CD4-positive, alpha-beta T cell (primary cell): ENCODE measurements at regions of chr11 and their contacts with region 1.

Region 1: GRCh38 chr11:33857933-33858371 is 33.9 kb downstream of the LMO2 start:
- DNase-seq: peak; percentile 54 to 84 (median 64)
- ATAC-seq: peak; percentile 89
- H3K4me3 ChIP-seq: no peak overlapping the region
- H3K4me3 Mint-ChIP-seq: no peak overlapping the region
- H3K27ac ChIP-seq: no peak overlapping the region
- H3K27ac Mint-ChIP-seq: no peak overlapping the region
- H3K4me1 ChIP-seq: no peaks in the 10 kb centered on the region
- H3K4me1 Mint-ChIP-seq: no peaks in the 10 kb centered on the region
- H3K27me3 ChIP-seq: peaks cover 21 to 30% of the 10 kb centered on the region in 2 experiments
- H3K27me3 Mint-ChIP-seq: peaks cover 56% of the 10 kb centered on the region
- CTCF ChIP-seq: peak; percentile 74

Region 2: GRCh38 chr11:33970984-33971466 is 113.1 kb after region 1 on chr11:
- CTCF ChIA-PET with region 1: no interaction called
- POLR2A ChIA-PET with region 1: interaction called, 3 read pairs
- intact Hi-C with region 1: loop called (anchors 1 to 2 kb)
- DNase-seq: peak in 5 of 14 experiments; percentile 4 to 49 (median 24)
- ATAC-seq: no peak
- H3K4me3 ChIP-seq: no peak overlapping the region
- H3K4me3 Mint-ChIP-seq: no peak overlapping the region
- H3K27ac ChIP-seq: no peak overlapping the region
- H3K27ac Mint-ChIP-seq: no peak overlapping the region
- H3K4me1 ChIP-seq: no peaks in the 10 kb centered on the region
- H3K4me1 Mint-ChIP-seq: no peaks in the 10 kb centered on the region
- H3K27me3 ChIP-seq: peaks cover 0 to 3% of the 10 kb centered on the region in 2 experiments
- H3K27me3 Mint-ChIP-seq: peaks cover 5% of the 10 kb centered on the region
- CTCF ChIP-seq: no peak

Region 3: GRCh38 chr11:33987975-33988580 is 130.1 kb after region 1 on chr11:
- CTCF ChIA-PET with region 1: interaction called, 5 read pairs
- POLR2A ChIA-PET with region 1: no interaction called
- intact Hi-C with region 1: loop called (anchors 1 kb)
- DNase-seq: peak; percentile 49 to 88 (median 63)
- ATAC-seq: peak; percentile 86
- H3K4me3 ChIP-seq: no peak overlapping the region
- H3K4me3 Mint-ChIP-seq: no peak overlapping the region
- H3K27ac ChIP-seq: no peak overlapping the region
- H3K27ac Mint-ChIP-seq: no peak overlapping the region
- H3K4me1 ChIP-seq: no peaks in the 10 kb centered on the region
- H3K4me1 Mint-ChIP-seq: peaks cover 6% of the 10 kb centered on the region
- H3K27me3 ChIP-seq: peaks cover 0 to 2% of the 10 kb centered on the region in 2 experiments
- H3K27me3 Mint-ChIP-seq: peaks cover 9% of the 10 kb centered on the region
- CTCF ChIP-seq: peak; percentile 64

Region 4: GRCh38 chr11:34492806-34493414 is 635.0 kb after region 1 on chr11:
- CTCF ChIA-PET with region 1: interaction called, 3 read pairs
- POLR2A ChIA-PET with region 1: no interaction called
- intact Hi-C with region 1: loop called in 1 of 2 experiments (anchors 5 kb)
- DNase-seq: peak in 12 of 14 experiments; percentile 7 to 64 (median 17)
- ATAC-seq: no peak
- H3K4me3 ChIP-seq: no peak overlapping the region
- H3K4me3 Mint-ChIP-seq: no peak overlapping the region
- H3K27ac ChIP-seq: no peak overlapping the region
- H3K27ac Mint-ChIP-seq: no peak overlapping the region
- H3K4me1 ChIP-seq: no peaks in the 10 kb centered on the region
- H3K4me1 Mint-ChIP-seq: no peaks in the 10 kb centered on the region
- H3K27me3 ChIP-seq: peaks cover 2 to 3% of the 10 kb centered on the region in 2 experiments
- H3K27me3 Mint-ChIP-seq: peaks cover 5% of the 10 kb centered on the region
- CTCF ChIP-seq: peak; percentile 71